Caco-2 (cell line): ENCODE measurements at regions of chr7 and their contacts with region 1.

Region 1: DNA sequence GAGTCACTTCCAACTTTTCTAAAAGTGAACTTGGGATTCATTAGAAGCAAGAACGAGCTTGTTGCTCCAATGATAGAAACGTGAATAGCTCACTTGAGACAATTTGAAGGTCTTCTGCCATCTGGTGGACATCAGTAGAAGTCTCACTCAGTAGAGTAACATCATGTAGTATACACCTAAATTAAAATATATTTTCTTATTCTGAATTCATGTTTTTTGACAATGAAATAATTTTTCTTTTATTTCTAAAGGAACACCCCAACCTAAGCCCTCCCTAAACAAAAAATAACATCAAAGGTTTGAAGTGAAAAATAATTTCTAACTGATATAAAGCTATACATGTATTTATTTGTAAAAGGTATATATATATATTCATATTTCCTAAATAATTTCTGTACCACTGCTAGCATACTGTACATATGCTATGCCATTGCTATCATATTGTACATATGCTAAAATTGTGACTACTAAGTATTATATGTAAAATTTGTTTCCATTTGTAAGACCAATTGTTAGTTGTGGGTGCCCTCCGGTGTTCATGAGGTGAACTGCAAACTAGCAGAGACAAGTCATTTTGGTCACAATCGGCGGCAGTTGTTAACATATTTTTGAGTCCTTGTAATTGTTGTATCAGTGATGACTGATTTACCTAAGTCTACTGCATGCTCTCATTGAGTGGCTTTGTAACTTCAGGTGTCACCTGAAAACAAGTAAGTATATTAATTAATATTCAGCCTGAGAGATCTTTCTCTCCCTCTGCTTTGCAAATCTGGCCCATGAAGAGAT is 121.9 kb downstream of the PTPRZ1 start:
- DNase-seq: peak; percentile 67 to 69
- H3K4me3 ChIP-seq: no peak overlapping the region
- H3K4me3 Mint-ChIP-seq: no peak overlapping the region
- H3K27ac Mint-ChIP-seq: no peak overlapping the region
- H3K4me1 ChIP-seq: no peaks in the 10 kb centered on the region
- H3K4me1 Mint-ChIP-seq: no peaks in the 10 kb centered on the region
- H3K27me3 ChIP-seq: no peaks in the 10 kb centered on the region
- H3K27me3 Mint-ChIP-seq: no peaks in the 10 kb centered on the region
- CTCF ChIP-seq: peak; percentile 84 to 91

Region 2: GRCh38 chr7:121126801-121127534 is 867.9 kb before region 1 on chr7:
- CTCF ChIA-PET with region 1: no interaction called
- POLR2A ChIA-PET with region 1: no interaction called
- intact Hi-C with region 1: loop called (anchors 10 kb)
- DNase-seq: no peak
- H3K4me3 ChIP-seq: no peak overlapping the region
- H3K4me3 Mint-ChIP-seq: no peak overlapping the region
- H3K27ac Mint-ChIP-seq: no peak overlapping the region
- H3K4me1 ChIP-seq: no peaks in the 10 kb centered on the region
- H3K4me1 Mint-ChIP-seq: no peaks in the 10 kb centered on the region
- H3K27me3 ChIP-seq: no peaks in the 10 kb centered on the region
- H3K27me3 Mint-ChIP-seq: no peaks in the 10 kb centered on the region
- CTCF ChIP-seq: no peak

Region 3: DNA sequence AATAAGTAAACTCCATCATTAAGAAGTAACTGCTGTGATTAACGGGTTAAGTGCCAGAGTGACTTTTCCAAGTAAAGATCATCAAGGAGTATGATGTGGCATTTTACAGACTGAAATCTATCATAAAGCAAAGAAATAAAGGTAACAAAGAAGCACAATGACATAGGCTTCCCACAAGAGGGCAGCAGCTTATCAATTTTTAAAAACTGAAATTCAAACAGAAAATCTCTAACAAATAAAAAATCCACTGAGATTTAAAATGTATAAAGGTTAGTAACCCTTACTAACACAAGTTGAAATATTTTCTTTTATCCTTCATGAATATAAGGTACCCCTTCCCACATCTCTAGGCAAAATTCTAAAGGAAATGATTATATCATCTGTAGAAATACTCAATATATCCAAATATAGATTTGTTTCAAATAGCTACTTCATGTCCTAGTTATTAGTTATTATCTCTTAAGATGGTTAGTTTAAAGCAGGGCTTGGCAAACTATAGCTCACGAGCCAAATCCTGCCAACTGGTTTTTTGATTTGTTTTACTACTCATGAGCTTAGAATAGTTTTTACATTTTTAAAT is 627.9 kb before region 1 on chr7:
- CTCF ChIA-PET with region 1: interaction called, 3 read pairs
- POLR2A ChIA-PET with region 1: no interaction called
- intact Hi-C with region 1: loop called (anchors 2 kb)
- DNase-seq: peak in 1 of 2 experiments; percentile 28
- H3K4me3 ChIP-seq: no peak overlapping the region
- H3K4me3 Mint-ChIP-seq: no peak overlapping the region
- H3K27ac Mint-ChIP-seq: no peak overlapping the region
- H3K4me1 ChIP-seq: no peaks in the 10 kb centered on the region
- H3K4me1 Mint-ChIP-seq: no peaks in the 10 kb centered on the region
- H3K27me3 ChIP-seq: no peaks in the 10 kb centered on the region
- H3K27me3 Mint-ChIP-seq: no peaks in the 10 kb centered on the region
- CTCF ChIP-seq: peak; percentile 55 to 67

Region 4: DNA sequence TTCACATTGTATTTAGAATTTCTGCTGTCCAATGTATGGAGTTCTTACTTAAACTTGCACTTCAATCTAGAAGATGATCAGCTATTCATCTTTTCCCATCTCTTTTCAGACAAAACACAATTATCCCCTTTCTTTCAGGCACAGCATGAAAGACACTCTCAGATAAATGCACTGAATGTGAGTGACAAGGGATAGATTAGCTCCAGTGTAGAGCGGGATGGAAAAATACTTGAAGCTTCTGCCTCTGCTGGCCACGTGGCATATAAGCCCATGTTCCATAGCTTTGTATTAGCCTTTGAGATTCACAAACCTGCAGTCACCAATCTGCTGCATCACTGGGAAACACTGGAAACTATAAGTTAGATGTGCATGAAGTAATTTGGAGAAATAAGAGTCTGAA is 436.5 kb before region 1 on chr7:
- CTCF ChIA-PET with region 1: no interaction called
- POLR2A ChIA-PET with region 1: no interaction called
- intact Hi-C with region 1: loop called (anchors 2 kb)
- DNase-seq: no peak
- H3K4me3 ChIP-seq: no peak overlapping the region
- H3K4me3 Mint-ChIP-seq: no peak overlapping the region
- H3K27ac Mint-ChIP-seq: no peak overlapping the region
- H3K4me1 ChIP-seq: no peaks in the 10 kb centered on the region
- H3K4me1 Mint-ChIP-seq: no peaks in the 10 kb centered on the region
- H3K27me3 ChIP-seq: no peaks in the 10 kb centered on the region
- H3K27me3 Mint-ChIP-seq: peaks cover 2% of the 10 kb centered on the region
- CTCF ChIP-seq: no peak

Region 5: GRCh38 chr7:121605317-121605680 is 389.5 kb before region 1 on chr7:
- CTCF ChIA-PET with region 1: interaction called, 26 read pairs
- POLR2A ChIA-PET with region 1: no interaction called
- intact Hi-C with region 1: loop called (anchors 1 kb)
- DNase-seq: peak in 1 of 2 experiments; percentile 7
- H3K4me3 ChIP-seq: no peak overlapping the region
- H3K4me3 Mint-ChIP-seq: no peak overlapping the region
- H3K27ac Mint-ChIP-seq: no peak overlapping the region
- H3K4me1 ChIP-seq: no peaks in the 10 kb centered on the region
- H3K4me1 Mint-ChIP-seq: peaks cover 6% of the 10 kb centered on the region
- H3K27me3 ChIP-seq: no peaks in the 10 kb centered on the region
- H3K27me3 Mint-ChIP-seq: peaks cover 16% of the 10 kb centered on the region
- CTCF ChIP-seq: peak in 1 of 2 experiments; percentile 18

Region 6: GRCh38 chr7:121730869-121731268 is 263.9 kb before region 1 on chr7:
- CTCF ChIA-PET with region 1: no interaction called
- POLR2A ChIA-PET with region 1: no interaction called
- intact Hi-C with region 1: no loop called
- DNase-seq: no peak
- H3K4me3 ChIP-seq: no peak overlapping the region
- H3K4me3 Mint-ChIP-seq: no peak overlapping the region
- H3K27ac Mint-ChIP-seq: no peak overlapping the region
- H3K4me1 ChIP-seq: no peaks in the 10 kb centered on the region
- H3K4me1 Mint-ChIP-seq: no peaks in the 10 kb centered on the region
- H3K27me3 ChIP-seq: no peaks in the 10 kb centered on the region
- H3K27me3 Mint-ChIP-seq: no peaks in the 10 kb centered on the region
- CTCF ChIP-seq: no peak

Region 7: GRCh38 chr7:121752706-121753105 is 242.1 kb before region 1 on chr7:
- CTCF ChIA-PET with region 1: interaction called, 3 read pairs
- POLR2A ChIA-PET with region 1: no interaction called
- intact Hi-C with region 1: loop called (anchors 1 kb)
- DNase-seq: peak in 1 of 2 experiments; percentile 5
- H3K4me3 ChIP-seq: no peak overlapping the region
- H3K4me3 Mint-ChIP-seq: no peak overlapping the region
- H3K27ac Mint-ChIP-seq: no peak overlapping the region
- H3K4me1 ChIP-seq: no peaks in the 10 kb centered on the region
- H3K4me1 Mint-ChIP-seq: no peaks in the 10 kb centered on the region
- H3K27me3 ChIP-seq: no peaks in the 10 kb centered on the region
- H3K27me3 Mint-ChIP-seq: peaks cover 9% of the 10 kb centered on the region
- CTCF ChIP-seq: peak; percentile 29 to 40

Region 8: GRCh38 chr7:121872831-121873288 is 122.0 kb before region 1 on chr7 and contains the start of gene PTPRZ1:
- CTCF ChIA-PET with region 1: no interaction called
- POLR2A ChIA-PET with region 1: no interaction called
- intact Hi-C with region 1: loop called (anchors 5 kb)
- DNase-seq: peak in 1 of 2 experiments; percentile 43
- H3K4me3 ChIP-seq: peak within 1 kb of the TSS; percentile 32
- H3K4me3 Mint-ChIP-seq: peak within 1 kb of the TSS; percentile 82
- H3K27ac Mint-ChIP-seq: no peak within 1 kb of the TSS
- H3K4me1 ChIP-seq: no peaks in the 10 kb centered on the region
- H3K4me1 Mint-ChIP-seq: peaks cover 12% of the 10 kb centered on the region
- H3K27me3 ChIP-seq: no peaks in the 10 kb centered on the region; the same call in 1 of the 2 replicates
- H3K27me3 Mint-ChIP-seq: peaks cover 29% of the 10 kb centered on the region
- CTCF ChIP-seq: no peak
- total RNA-seq, gene PTPRZ1: 0.39 TPM in 1 of 2 replicates, not detected in the other

Region 9: DNA sequence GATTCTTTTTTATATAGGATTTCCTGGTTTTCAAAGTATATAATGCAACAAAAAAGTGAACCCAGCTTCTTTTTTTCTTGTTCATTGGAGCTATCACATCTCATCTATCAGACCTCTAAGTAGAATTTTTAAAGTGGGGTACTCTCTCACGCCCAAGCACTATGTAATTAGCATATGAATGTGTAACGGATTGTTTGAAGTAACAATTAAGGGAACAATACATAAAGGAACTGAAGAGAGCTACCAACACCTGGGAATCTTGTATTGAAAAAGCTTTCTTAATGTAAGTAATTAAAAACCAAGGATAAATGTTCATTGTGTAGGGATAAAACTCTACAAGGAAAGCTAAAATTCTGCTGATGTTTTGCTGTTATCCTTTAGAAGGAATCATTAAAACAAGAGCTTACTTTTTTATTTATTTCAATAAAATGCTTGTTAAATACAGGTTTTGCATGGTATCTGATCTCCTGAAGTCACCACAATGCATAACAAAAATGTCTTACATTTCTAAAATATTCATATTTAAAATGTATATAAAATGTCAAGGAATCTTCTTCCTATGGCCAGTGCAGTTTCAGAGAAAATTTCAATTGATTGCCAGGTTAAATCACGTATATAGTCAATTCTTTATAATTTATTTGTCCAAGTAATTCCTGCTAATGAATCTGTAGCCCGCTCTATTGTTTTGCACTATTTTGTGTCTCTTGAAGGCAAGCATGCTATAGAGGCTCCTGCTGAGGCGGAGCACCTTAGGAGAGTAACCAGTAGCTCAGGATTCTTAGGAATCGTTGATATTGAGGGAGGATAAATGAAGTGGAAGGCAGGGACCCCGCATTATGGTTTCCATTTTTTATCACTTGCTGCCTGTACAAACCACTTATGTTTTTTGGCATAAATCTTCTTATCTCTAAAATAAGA is 70.3 kb before region 1 on chr7:
- CTCF ChIA-PET with region 1: no interaction called
- POLR2A ChIA-PET with region 1: no interaction called
- intact Hi-C with region 1: no loop called
- DNase-seq: no peak
- H3K4me3 ChIP-seq: no peak overlapping the region
- H3K4me3 Mint-ChIP-seq: no peak overlapping the region
- H3K27ac Mint-ChIP-seq: no peak overlapping the region
- H3K4me1 ChIP-seq: no peaks in the 10 kb centered on the region
- H3K4me1 Mint-ChIP-seq: no peaks in the 10 kb centered on the region
- H3K27me3 ChIP-seq: no peaks in the 10 kb centered on the region
- H3K27me3 Mint-ChIP-seq: no peaks in the 10 kb centered on the region
- CTCF ChIP-seq: no peak

Region 10: GRCh38 chr7:122018032-122018431 is 23.2 kb after region 1 on chr7:
- CTCF ChIA-PET with region 1: no interaction called
- POLR2A ChIA-PET with region 1: no interaction called
- intact Hi-C with region 1: no loop called
- DNase-seq: no peak
- H3K4me3 ChIP-seq: no peak overlapping the region
- H3K4me3 Mint-ChIP-seq: no peak overlapping the region
- H3K27ac Mint-ChIP-seq: no peak overlapping the region
- H3K4me1 ChIP-seq: no peaks in the 10 kb centered on the region
- H3K4me1 Mint-ChIP-seq: no peaks in the 10 kb centered on the region
- H3K27me3 ChIP-seq: no peaks in the 10 kb centered on the region
- H3K27me3 Mint-ChIP-seq: peaks cover 3% of the 10 kb centered on the region
- CTCF ChIP-seq: no peak